Vagina (tissue), 2 donors: ENCODE measurements at regions of chr12 and their contacts with region 1.

Region 1: DNA sequence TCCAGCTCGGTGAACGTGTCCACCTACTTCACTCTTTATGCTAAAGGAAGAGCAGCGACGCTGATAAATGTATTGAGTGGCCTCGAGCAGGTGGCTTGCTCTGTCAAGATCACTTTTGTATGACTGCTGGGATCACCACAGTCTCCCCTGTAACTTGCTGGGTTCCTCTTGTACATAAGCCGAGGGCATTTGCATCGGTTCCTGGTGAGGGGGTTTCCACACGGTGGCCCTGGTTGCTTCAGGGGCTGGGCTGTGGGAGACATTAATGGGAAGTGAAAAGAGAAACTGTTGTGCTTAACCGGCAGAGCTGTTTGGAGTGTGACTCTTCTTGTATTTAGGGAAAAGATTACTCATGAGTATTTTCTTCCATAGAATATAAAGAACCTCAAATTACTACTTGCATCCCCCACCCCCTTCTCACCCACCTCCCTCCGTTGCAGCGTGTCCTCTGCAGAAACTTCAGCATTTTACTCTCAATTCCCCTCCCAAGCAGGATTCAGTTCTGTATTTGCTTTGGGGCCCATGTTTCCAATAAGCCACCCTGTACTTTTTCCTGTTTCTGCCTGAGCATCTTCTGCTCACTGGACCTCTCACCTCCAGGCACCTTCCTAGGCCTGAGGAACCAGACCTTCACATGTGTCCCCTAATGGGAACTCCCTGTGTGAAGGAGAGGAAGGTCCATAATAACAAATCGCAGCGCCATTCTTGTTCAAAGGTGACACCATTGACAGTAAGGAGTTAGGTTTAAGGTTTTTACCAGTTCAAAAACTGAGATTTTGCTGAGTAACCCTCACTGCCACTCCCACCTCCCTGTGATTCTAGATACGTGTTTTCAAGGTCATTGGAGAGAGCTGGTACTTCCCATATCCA is 187.0 kb downstream of the ETV6 start:
- DNase-seq: no peak
- H3K4me3 ChIP-seq: no peak overlapping the region
- H3K27ac ChIP-seq: no peak overlapping the region
- H3K4me1 ChIP-seq: peaks cover 42% of the 10 kb centered on the region
- H3K27me3 ChIP-seq: no peaks in the 10 kb centered on the region
- CTCF ChIP-seq: no peak
- POLR2A ChIP-seq: no peak

Region 2: GRCh38 chr12:11758510-11759493 is 77.7 kb before region 1 on chr12:
- intact Hi-C with region 1: loop called (anchors 10 kb)
- DNase-seq: no peak
- H3K4me3 ChIP-seq: no peak overlapping the region
- H3K27ac ChIP-seq: peak overlapping the region; percentile 78
- H3K4me1 ChIP-seq: peaks cover 23% of the 10 kb centered on the region
- H3K27me3 ChIP-seq: no peaks in the 10 kb centered on the region
- CTCF ChIP-seq: no peak
- POLR2A ChIP-seq: no peak

Region 3: DNA sequence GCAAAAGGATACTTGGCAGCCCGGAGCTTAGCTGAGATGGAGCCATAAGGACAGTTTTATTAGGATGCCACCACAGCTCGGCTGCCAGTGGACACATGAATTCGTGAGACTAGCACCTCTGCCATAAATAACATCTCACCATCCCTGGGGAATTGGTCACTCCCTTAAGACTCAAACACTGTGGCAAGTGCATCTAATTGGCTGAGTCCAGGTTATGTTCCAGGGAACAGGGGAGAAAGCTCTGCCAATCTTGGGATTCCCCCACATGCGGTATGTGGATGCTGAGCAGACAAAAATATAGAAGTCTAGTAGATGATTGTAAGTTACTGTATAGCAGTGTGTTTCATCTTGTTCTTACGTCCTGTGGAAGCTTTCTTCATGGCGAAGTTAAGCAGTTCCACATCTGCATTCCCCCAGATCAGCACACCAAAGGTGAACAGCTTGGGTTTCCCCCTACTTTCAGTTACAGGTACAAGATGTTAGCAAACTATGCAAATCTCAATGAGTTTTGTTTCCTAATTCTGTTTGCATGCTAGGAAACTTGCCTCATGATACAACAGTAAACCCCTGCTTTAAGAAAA is 55.9 kb before region 1 on chr12:
- intact Hi-C with region 1: no loop called
- DNase-seq: no peak
- H3K4me3 ChIP-seq: no peak overlapping the region
- H3K27ac ChIP-seq: no peak overlapping the region
- H3K4me1 ChIP-seq: peaks cover 16% of the 10 kb centered on the region
- H3K27me3 ChIP-seq: no peaks in the 10 kb centered on the region
- CTCF ChIP-seq: no peak
- POLR2A ChIP-seq: no peak